ENCODE measurements at regions of chr22 and their contacts with region 1.

Region 1: GRCh38 chr22:22753526-22754267 is 109.3 kb downstream of the GGTLC2 start:
- DNase-seq: peak; percentile 73 to 81 (median 77)
- H3K4me3 ChIP-seq: no peak overlapping the region
- H3K4me3 Mint-ChIP-seq: peak overlapping the region in 7 of 8 donors; percentile 50 to 89 (median 81)
- H3K27ac ChIP-seq: peak overlapping the region; percentile 30
- H3K27ac Mint-ChIP-seq: peak overlapping the region; percentile 80 to 94 (median 87)
- H3K4me1 ChIP-seq: peaks cover 47% of the 10 kb centered on the region
- H3K4me1 Mint-ChIP-seq: peaks cover 40 to 63% (median 52%) of the 10 kb centered on the region in 4 donors
- H3K27me3 ChIP-seq: no peaks in the 10 kb centered on the region
- H3K27me3 Mint-ChIP-seq: no peaks in the 10 kb centered on the region

Region 2: GRCh38 chr22:22710719-22711531 is 42.8 kb before region 1 on chr22:
- CTCF ChIA-PET with region 1: interaction called, 19 read pairs
- POLR2A ChIA-PET with region 1: no interaction called
- intact Hi-C with region 1: loop called (anchors 2 kb)
- DNase-seq: peak; percentile 54 to 69 (median 64)
- H3K4me3 ChIP-seq: no peak overlapping the region
- H3K4me3 Mint-ChIP-seq: no peak overlapping the region
- H3K27ac ChIP-seq: no peak overlapping the region
- H3K27ac Mint-ChIP-seq: peak overlapping the region in 3 of 7 donors; percentile 29 to 57 (median 36)
- H3K4me1 ChIP-seq: no peaks in the 10 kb centered on the region
- H3K4me1 Mint-ChIP-seq: peaks cover 0 to 3% (median 2%) of the 10 kb centered on the region in 4 donors
- H3K27me3 ChIP-seq: no peaks in the 10 kb centered on the region
- H3K27me3 Mint-ChIP-seq: no peaks in the 10 kb centered on the region

Region 3: DNA sequence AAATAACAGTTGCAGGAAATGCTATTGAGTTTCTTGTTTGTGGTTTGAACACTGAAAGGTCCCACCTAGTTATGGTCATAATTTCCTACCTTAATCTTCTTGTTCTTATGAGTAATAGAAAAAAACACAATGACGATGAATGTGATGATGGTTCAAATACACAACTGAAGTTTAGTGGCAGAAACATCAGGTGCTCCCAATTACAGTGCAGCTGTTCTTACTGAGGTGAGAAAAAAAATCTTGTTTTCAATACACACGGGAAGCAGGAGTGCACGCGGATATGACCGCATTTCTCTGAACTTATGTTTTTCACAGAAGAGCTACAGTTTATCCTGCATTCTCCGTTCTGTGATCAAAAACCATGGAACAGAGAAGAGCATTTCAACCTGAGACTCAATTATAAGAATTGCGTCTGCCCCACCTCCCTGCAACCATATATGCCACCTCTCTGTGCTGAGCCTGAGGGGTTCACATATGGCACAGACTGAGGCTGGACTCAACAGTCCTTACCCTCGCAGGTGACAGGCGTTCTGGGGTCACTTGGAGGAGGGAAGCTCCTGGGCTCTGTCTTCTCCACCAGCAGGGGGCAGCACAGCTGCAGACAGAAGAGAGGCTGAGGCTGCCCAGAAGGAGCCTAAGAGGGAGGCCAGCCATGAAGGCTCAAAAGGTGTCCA is 34.2 kb after region 1 on chr22:
- CTCF ChIA-PET with region 1: interaction called, 96 read pairs
- POLR2A ChIA-PET with region 1: interaction called, 71 read pairs
- intact Hi-C with region 1: loop called (anchors 1 kb)
- DNase-seq: peak; percentile 66 to 75 (median 70)
- H3K4me3 ChIP-seq: no peak overlapping the region
- H3K4me3 Mint-ChIP-seq: peak overlapping the region in 7 of 8 donors; percentile 6 to 61 (median 53)
- H3K27ac ChIP-seq: peak overlapping the region; percentile 49
- H3K27ac Mint-ChIP-seq: peak overlapping the region; percentile 79 to 94 (median 90)
- H3K4me1 ChIP-seq: peaks cover 58% of the 10 kb centered on the region
- H3K4me1 Mint-ChIP-seq: peaks cover 34 to 75% (median 52%) of the 10 kb centered on the region in 4 donors
- H3K27me3 ChIP-seq: no peaks in the 10 kb centered on the region
- H3K27me3 Mint-ChIP-seq: no peaks in the 10 kb centered on the region

Region 4: GRCh38 chr22:22818861-22819855 is 65.5 kb after region 1 on chr22:
- CTCF ChIA-PET with region 1: interaction called, 49 read pairs
- POLR2A ChIA-PET with region 1: interaction called, 67 read pairs
- intact Hi-C with region 1: no loop called
- DNase-seq: peak; percentile 56 to 59 (median 58)
- H3K4me3 ChIP-seq: peak overlapping the region in 1 of 2 donors; percentile 62
- H3K4me3 Mint-ChIP-seq: peak overlapping the region; percentile 76 to 91 (median 81)
- H3K27ac ChIP-seq: peak overlapping the region; percentile 58
- H3K27ac Mint-ChIP-seq: peak overlapping the region; percentile 88 to 97 (median 96)
- H3K4me1 ChIP-seq: peaks cover 96% of the 10 kb centered on the region
- H3K4me1 Mint-ChIP-seq: peaks cover 84 to 99% (median 94%) of the 10 kb centered on the region in 4 donors
- H3K27me3 ChIP-seq: no peaks in the 10 kb centered on the region
- H3K27me3 Mint-ChIP-seq: no peaks in the 10 kb centered on the region

Region 5: DNA sequence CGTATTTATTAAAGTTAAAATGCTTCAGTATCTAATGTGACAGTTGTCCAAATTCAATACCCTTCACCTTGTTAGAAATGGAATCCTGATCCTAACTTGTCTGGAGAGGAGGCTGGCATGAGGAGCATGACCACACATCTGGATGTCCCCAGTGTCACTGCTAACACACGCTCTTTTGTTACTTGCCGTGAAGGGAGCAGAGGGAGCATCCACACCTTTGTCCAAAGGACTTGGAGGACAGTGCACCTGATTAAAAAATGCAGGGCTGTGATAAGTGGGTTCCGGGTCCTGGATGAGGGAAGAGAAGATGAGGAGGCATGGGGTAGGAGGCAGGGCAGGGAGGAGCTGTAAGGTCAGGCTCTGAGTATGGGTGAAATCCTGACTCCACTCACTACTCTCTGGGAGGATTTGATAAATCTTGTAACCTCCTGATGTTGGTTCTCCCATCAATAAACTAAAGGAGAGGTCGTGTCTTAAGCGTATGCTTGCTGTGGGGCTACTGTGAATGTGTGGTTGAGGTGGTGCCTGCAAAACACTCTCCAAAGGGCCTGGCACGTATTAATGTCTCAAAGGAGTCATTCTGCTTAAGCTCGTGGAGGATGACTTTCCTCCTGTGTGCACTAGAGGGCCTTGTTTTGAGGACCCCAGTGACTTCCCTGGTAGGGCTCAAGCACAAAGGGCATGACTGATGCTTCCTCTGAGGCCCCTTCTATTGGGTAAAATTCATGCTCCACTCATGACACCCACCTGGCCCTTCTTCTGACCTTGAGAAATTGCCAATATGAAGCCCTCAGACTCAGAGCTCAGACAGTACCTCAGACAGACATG is 117.1 kb after region 1 on chr22:
- CTCF ChIA-PET with region 1: interaction called, 28 read pairs
- POLR2A ChIA-PET with region 1: interaction called, 8 read pairs
- intact Hi-C with region 1: no loop called
- DNase-seq: no peak
- H3K4me3 ChIP-seq: no peak overlapping the region
- H3K4me3 Mint-ChIP-seq: no peak overlapping the region
- H3K27ac ChIP-seq: no peak overlapping the region
- H3K27ac Mint-ChIP-seq: peak overlapping the region in 3 of 7 donors; percentile 29 to 72 (median 63)
- H3K4me1 ChIP-seq: peaks cover 13% of the 10 kb centered on the region
- H3K4me1 Mint-ChIP-seq: peaks cover 12 to 29% (median 15%) of the 10 kb centered on the region in 4 donors
- H3K27me3 ChIP-seq: no peaks in the 10 kb centered on the region
- H3K27me3 Mint-ChIP-seq: no peaks in the 10 kb centered on the region

Region 6: DNA sequence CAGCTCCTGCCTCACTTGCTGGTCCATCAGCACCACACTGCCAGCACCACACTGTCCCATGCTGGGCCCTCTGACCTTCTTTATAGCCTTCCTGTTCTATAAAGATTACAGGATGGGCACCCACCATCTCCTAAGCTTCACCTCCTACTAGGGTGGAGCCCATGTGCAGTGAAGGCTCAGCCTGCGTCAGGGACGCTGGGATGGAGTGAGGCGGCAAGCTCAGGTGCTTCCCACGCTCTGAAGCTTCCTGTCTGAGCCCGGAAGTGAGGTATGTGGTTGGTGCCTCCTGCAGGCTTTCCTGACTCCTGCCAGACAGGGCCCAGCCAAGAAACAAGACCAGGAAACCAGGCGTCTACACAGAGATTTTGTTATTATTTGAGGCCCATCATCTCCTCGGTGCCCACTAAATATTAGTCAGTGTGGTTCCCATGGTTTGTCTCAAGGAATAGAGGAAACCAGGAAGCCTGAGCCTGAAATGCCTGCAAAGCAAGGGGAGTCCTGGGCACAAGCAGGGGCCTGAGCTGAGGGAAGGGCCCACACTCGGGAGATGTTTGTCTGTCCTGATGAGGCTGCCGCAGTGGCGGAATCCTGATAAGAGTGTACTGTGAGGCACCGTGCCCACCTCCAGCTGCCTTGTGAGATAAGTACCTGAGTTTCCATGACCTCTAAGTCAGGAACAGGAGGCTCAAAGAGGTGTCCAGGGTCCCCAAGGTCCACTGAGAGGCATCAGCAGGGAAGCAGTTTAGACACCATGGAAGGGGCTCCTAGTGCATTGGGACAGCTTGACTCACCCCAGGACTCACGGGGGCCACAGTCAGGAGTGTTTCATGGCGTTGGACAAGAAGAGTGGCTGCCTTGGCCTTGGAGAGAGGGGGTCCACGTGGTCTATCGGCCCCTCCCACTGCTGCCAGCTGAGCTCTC is 366.1 kb after region 1 on chr22:
- CTCF ChIA-PET with region 1: interaction called, 10 read pairs
- POLR2A ChIA-PET with region 1: no interaction called
- intact Hi-C with region 1: no loop called
- DNase-seq: peak; percentile 66 to 81 (median 71)
- H3K4me3 ChIP-seq: no peak overlapping the region
- H3K4me3 Mint-ChIP-seq: peak overlapping the region; percentile 58 to 86 (median 67)
- H3K27ac ChIP-seq: peak overlapping the region; percentile 51
- H3K27ac Mint-ChIP-seq: peak overlapping the region; percentile 89 to 99 (median 98)
- H3K4me1 ChIP-seq: peaks cover 16% of the 10 kb centered on the region
- H3K4me1 Mint-ChIP-seq: peaks cover 8 to 24% (median 16%) of the 10 kb centered on the region in 4 donors
- H3K27me3 ChIP-seq: no peaks in the 10 kb centered on the region
- H3K27me3 Mint-ChIP-seq: no peaks in the 10 kb centered on the region